Psoas muscle (tissue), 8 donors: ENCODE measurements at regions of chr16 and their contacts with region 1.

Region 1: GRCh38 chr16:84925092-84925772 is 86.1 kb downstream of the ZDHHC7 start:
- DNase-seq: peak; percentile 74 to 89
- ATAC-seq: peak; percentile 48 to 76 (median 68)
- H3K4me3 ChIP-seq: no peak overlapping the region
- H3K27ac ChIP-seq: no peak overlapping the region
- H3K4me1 ChIP-seq: peaks cover 23% of the 10 kb centered on the region
- H3K27me3 ChIP-seq: peaks cover 0 to 3% (median 0%) of the 10 kb centered on the region in 3 donors
- CTCF ChIP-seq: peak; percentile 96

Region 2: GRCh38 chr16:84647828-84648594 is 277.2 kb before region 1 on chr16 and contains the start of gene KLHL36:
- intact Hi-C with region 1: loop called in 1 of 2 experiments (anchors 5 kb)
- DNase-seq: peak; percentile 71 to 79
- ATAC-seq: peak; percentile 69 to 79 (median 72)
- H3K4me3 ChIP-seq: peak within 1 kb of the TSS; percentile 75
- H3K27ac ChIP-seq: peak within 1 kb of the TSS; percentile 70
- H3K4me1 ChIP-seq: peaks cover 6% of the 10 kb centered on the region
- H3K27me3 ChIP-seq: no peaks in the 10 kb centered on the region
- CTCF ChIP-seq: no peak
- total RNA-seq, gene KLHL36: 13.1 to 19.3 (median 15.9) TPM

Region 3: GRCh38 chr16:84952335-84953189 is 27.3 kb after region 1 on chr16:
- intact Hi-C with region 1: loop called (anchors 1 to 2 kb)
- DNase-seq: peak; percentile 66 to 75
- ATAC-seq: peak; percentile 93 to 98 (median 97)
- H3K4me3 ChIP-seq: no peak overlapping the region
- H3K27ac ChIP-seq: no peak overlapping the region
- H3K4me1 ChIP-seq: peaks cover 6% of the 10 kb centered on the region
- H3K27me3 ChIP-seq: no peaks in the 10 kb centered on the region
- CTCF ChIP-seq: peak; percentile 95

Region 4: GRCh38 chr16:84970447-84971127 is 45.4 kb after region 1 on chr16:
- intact Hi-C with region 1: loop called (anchors 1 to 5 kb)
- DNase-seq: peak; percentile 84 to 89
- ATAC-seq: peak; percentile 76 to 83 (median 80)
- H3K4me3 ChIP-seq: no peak overlapping the region
- H3K27ac ChIP-seq: no peak overlapping the region
- H3K4me1 ChIP-seq: peaks cover 14% of the 10 kb centered on the region
- H3K27me3 ChIP-seq: no peaks in the 10 kb centered on the region
- CTCF ChIP-seq: peak; percentile 88